ENCODE measurements at regions of chr7 and their contacts with region 1.

Region 1: GRCh38 chr7:94395141-94396036 is 694 bp downstream of the COL1A2 start:
- DNase-seq: peak; percentile 59 to 64
- H3K4me3 ChIP-seq: no peak overlapping the region
- H3K4me3 Mint-ChIP-seq: peak overlapping the region; percentile 59
- H3K27ac Mint-ChIP-seq: no peak overlapping the region
- H3K4me1 ChIP-seq: peaks cover 11% of the 10 kb centered on the region
- H3K4me1 Mint-ChIP-seq: peaks cover 6% of the 10 kb centered on the region
- H3K27me3 ChIP-seq: no peaks in the 10 kb centered on the region
- H3K27me3 Mint-ChIP-seq: no peaks in the 10 kb centered on the region
- CTCF ChIP-seq: peak; percentile 74 to 79

Region 2: DNA sequence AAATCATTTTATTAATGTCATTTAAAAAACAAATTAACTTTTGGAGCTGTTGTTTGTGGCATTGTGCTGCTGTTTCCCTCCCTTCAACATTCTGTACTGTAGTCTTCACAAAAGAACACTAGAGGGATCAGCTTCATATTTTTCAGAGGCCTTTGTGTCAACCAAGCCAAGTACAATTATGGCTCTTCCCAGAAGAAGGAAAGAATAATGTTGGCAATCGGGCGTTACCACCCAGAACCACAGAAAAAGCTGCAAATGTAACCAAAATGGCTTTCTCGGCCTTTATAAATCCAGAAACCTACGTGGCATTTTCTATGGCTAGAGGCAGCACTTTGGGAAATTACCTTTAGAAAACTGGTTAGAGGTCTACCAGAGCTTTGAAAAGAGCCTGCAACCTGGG is 99.5 kb before region 1 on chr7:
- CTCF ChIA-PET with region 1: interaction called, 56 read pairs
- POLR2A ChIA-PET with region 1: no interaction called
- intact Hi-C with region 1: loop called (anchors 1 kb)
- DNase-seq: peak in 1 of 2 experiments; percentile 6
- H3K4me3 ChIP-seq: no peak overlapping the region
- H3K4me3 Mint-ChIP-seq: no peak overlapping the region
- H3K27ac Mint-ChIP-seq: no peak overlapping the region
- H3K4me1 ChIP-seq: peaks cover 12% of the 10 kb centered on the region
- H3K4me1 Mint-ChIP-seq: peaks cover 7% of the 10 kb centered on the region
- H3K27me3 ChIP-seq: no peaks in the 10 kb centered on the region
- H3K27me3 Mint-ChIP-seq: peaks cover 5% of the 10 kb centered on the region
- CTCF ChIP-seq: peak; percentile 30 to 57

Measured in Caco-2 (cell line).